ENCODE measurements at regions of chr14 and their contacts with region 1.

Region 1: DNA sequence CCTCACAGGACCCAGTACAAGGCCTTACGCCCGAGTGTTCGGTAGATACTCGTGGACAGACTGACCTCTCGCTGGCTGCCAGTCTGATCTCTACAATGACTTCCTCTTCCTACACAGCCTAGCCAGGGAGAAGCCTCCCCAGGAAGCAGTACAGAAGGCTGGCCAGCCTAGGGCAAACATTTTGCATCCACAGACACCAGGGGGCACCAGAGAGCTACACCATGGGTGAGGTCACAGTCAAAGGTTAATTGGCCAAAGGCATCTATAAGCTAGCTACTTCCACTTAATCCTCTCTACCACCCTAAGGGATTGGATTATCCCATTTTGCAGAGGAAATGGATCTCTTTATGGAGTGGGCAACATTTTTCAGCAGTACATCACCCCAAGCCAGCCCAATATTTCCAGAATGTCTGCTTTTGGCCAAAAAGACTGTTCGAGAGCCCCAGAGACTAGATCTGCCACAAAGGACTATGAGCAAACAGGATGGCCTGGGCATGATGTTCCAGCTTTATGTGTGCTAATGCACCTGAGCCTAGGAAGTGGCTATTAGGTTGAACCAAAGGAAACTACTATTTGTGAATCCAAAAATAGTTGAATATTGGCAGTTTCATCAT is 14.6 kb upstream of the PNMA1 start:
- DNase-seq: peak; percentile 80 to 90
- H3K4me3 ChIP-seq: no peak overlapping the region
- H3K4me3 Mint-ChIP-seq: no peak overlapping the region
- H3K27ac Mint-ChIP-seq: peak overlapping the region; percentile 60
- H3K4me1 ChIP-seq: peaks cover 21% of the 10 kb centered on the region
- H3K4me1 Mint-ChIP-seq: peaks cover 5% of the 10 kb centered on the region
- H3K27me3 ChIP-seq: no peaks in the 10 kb centered on the region
- H3K27me3 Mint-ChIP-seq: no peaks in the 10 kb centered on the region
- CTCF ChIP-seq: peak; percentile 91 to 95

Region 2: GRCh38 chr14:73741386-73741875 is 12.6 kb after region 1 on chr14:
- CTCF ChIA-PET with region 1: interaction called, 32 read pairs
- POLR2A ChIA-PET with region 1: no interaction called
- intact Hi-C with region 1: no loop called
- DNase-seq: peak; percentile 56 to 73
- H3K4me3 ChIP-seq: peak overlapping the region; percentile 15; the same call in 1 of the 2 replicates
- H3K4me3 Mint-ChIP-seq: peak overlapping the region; percentile 69
- H3K27ac Mint-ChIP-seq: peak overlapping the region; percentile 83
- H3K4me1 ChIP-seq: peaks cover 66% of the 10 kb centered on the region
- H3K4me1 Mint-ChIP-seq: peaks cover 39% of the 10 kb centered on the region
- H3K27me3 ChIP-seq: no peaks in the 10 kb centered on the region
- H3K27me3 Mint-ChIP-seq: no peaks in the 10 kb centered on the region
- CTCF ChIP-seq: no peak

Region 3: GRCh38 chr14:73759714-73760597 is 31.1 kb after region 1 on chr14:
- CTCF ChIA-PET with region 1: interaction called, 68 read pairs
- POLR2A ChIA-PET with region 1: interaction called, 6 read pairs
- intact Hi-C with region 1: loop called (anchors 1 kb)
- DNase-seq: peak; percentile 96 to 98
- H3K4me3 ChIP-seq: peak overlapping the region; percentile 64
- H3K4me3 Mint-ChIP-seq: peak overlapping the region; percentile 84
- H3K27ac Mint-ChIP-seq: peak overlapping the region; percentile 93
- H3K4me1 ChIP-seq: peaks cover 55% of the 10 kb centered on the region
- H3K4me1 Mint-ChIP-seq: peaks cover 34% of the 10 kb centered on the region
- H3K27me3 ChIP-seq: no peaks in the 10 kb centered on the region
- H3K27me3 Mint-ChIP-seq: no peaks in the 10 kb centered on the region
- CTCF ChIP-seq: peak in 1 of 2 experiments; percentile 19

Region 4: DNA sequence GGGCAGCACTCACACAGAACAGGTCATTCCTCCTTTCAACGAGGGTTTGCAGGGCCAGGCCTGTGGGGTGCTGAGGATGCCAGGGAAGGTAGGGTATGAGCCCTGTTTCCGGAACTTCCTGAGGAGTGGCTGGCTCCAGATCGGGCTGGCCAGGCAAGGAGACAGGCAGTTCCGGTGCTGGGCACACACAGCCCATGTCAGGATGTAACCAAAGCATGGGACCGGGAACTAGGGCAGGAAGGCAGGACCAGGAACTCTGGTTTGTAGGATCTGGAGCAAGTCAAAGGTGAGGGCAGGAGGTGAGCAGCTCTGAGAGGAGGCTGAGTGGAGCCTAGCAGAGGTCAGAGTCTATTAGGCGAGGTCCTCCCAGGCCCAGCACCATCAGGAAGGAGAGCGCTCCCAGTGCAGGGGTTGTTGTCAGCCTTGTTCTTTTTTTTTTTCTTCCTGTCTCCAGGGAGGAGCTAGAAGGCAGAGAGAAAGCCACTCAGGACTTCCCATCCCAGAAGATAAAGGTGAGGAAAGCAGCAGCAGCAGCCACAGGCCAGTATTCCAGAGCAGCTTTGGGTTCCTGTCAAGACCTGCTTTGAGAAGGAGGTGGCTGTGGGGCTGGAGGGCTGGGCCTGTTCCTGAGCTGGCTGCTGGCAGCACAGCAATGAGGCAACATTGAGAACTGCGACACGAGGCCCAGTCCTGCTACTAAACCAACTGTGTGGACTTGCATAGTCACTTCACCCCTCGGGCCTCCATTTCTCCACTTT is 73.8 kb after region 1 on chr14:
- CTCF ChIA-PET with region 1: interaction called, 10 read pairs
- POLR2A ChIA-PET with region 1: no interaction called
- intact Hi-C with region 1: no loop called
- DNase-seq: peak; percentile 64 to 79
- H3K4me3 ChIP-seq: no peak overlapping the region
- H3K4me3 Mint-ChIP-seq: no peak overlapping the region
- H3K27ac Mint-ChIP-seq: peak overlapping the region; percentile 68
- H3K4me1 ChIP-seq: peaks cover 36% of the 10 kb centered on the region
- H3K4me1 Mint-ChIP-seq: peaks cover 14% of the 10 kb centered on the region
- H3K27me3 ChIP-seq: no peaks in the 10 kb centered on the region
- H3K27me3 Mint-ChIP-seq: no peaks in the 10 kb centered on the region
- CTCF ChIP-seq: no peak

Region 5: GRCh38 chr14:73851644-73852382 is 123.0 kb after region 1 on chr14 and contains the start of gene PTGR2:
- CTCF ChIA-PET with region 1: interaction called, 12 read pairs
- POLR2A ChIA-PET with region 1: no interaction called
- intact Hi-C with region 1: no loop called
- DNase-seq: peak; percentile 99
- H3K4me3 ChIP-seq: peak within 1 kb of the TSS; percentile 56
- H3K4me3 Mint-ChIP-seq: peak within 1 kb of the TSS; percentile 94
- H3K27ac Mint-ChIP-seq: peak within 1 kb of the TSS; percentile 99
- H3K4me1 ChIP-seq: peaks cover 18% of the 10 kb centered on the region
- H3K4me1 Mint-ChIP-seq: no peaks in the 10 kb centered on the region
- H3K27me3 ChIP-seq: no peaks in the 10 kb centered on the region
- H3K27me3 Mint-ChIP-seq: no peaks in the 10 kb centered on the region
- CTCF ChIP-seq: peak in 1 of 2 experiments; percentile 14
- total RNA-seq, gene PTGR2: 14.2 and 16.5 TPM in 2 replicates

Region 6: DNA sequence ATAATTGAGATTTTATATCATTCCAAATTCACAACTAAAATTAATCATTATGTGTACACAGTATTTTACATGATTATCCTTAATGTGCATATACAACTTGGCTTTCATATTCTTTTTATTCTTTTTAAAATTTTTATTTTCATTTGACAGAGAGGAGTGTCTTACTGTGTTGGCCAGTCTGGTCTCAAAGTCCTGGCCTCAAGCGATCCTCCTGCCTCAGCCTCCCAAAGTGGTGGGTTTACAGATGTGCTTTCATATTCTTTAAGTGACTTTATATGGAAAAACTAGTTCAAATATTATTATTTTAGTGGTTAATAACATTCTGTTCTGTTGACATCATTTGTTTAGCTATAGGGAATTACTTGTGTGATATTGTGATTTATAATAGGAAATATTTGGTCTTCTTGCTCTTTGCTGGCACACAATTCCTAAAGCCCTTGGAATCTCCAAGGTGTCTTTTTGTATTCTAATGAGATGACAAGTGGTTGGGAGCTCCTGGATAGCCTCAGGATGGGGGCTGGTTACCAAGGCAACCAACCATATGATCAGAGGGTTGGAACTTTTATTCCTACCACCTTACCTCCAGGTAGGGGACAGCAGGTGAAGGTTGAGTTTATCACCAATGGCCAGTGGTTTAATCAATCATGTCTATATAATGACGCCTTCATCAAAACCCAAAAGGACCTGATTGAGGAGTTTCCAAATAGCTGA is 141.9 kb after region 1 on chr14:
- CTCF ChIA-PET with region 1: interaction called, 10 read pairs
- POLR2A ChIA-PET with region 1: no interaction called
- intact Hi-C with region 1: loop called (anchors 1 kb)
- DNase-seq: no peak
- H3K4me3 ChIP-seq: no peak overlapping the region
- H3K4me3 Mint-ChIP-seq: no peak overlapping the region
- H3K27ac Mint-ChIP-seq: no peak overlapping the region
- H3K4me1 ChIP-seq: no peaks in the 10 kb centered on the region
- H3K4me1 Mint-ChIP-seq: peaks cover 4% of the 10 kb centered on the region
- H3K27me3 ChIP-seq: no peaks in the 10 kb centered on the region
- H3K27me3 Mint-ChIP-seq: no peaks in the 10 kb centered on the region
- CTCF ChIP-seq: no peak

Region 7: DNA sequence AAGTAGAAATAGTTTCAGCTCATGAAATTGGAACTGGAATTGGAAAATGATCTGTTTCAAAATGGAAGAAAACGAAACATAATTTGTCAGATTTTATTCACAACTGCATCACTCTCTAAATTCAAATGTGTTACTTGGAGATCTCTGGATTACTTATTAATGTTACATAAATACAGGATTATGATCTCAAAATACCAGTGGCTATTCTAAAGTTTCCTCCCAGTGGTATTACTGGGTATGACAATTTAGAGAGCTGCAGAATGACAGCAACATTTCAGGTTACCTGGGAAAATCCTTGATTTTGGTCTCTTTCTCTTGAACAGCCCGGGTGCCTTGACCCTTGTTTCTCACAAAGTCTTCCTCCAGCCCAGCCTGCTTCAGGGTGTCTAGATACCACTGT is 206.8 kb after region 1 on chr14:
- CTCF ChIA-PET with region 1: no interaction called
- POLR2A ChIA-PET with region 1: no interaction called
- intact Hi-C with region 1: no loop called
- DNase-seq: peak in 1 of 2 experiments; percentile 21
- H3K4me3 ChIP-seq: no peak overlapping the region
- H3K4me3 Mint-ChIP-seq: no peak overlapping the region
- H3K27ac Mint-ChIP-seq: no peak overlapping the region
- H3K4me1 ChIP-seq: no peaks in the 10 kb centered on the region
- H3K4me1 Mint-ChIP-seq: no peaks in the 10 kb centered on the region
- H3K27me3 ChIP-seq: no peaks in the 10 kb centered on the region
- H3K27me3 Mint-ChIP-seq: no peaks in the 10 kb centered on the region
- CTCF ChIP-seq: peak in 1 of 2 experiments; percentile 40